Mammary epithelial cell (primary cell): ENCODE measurements at regions of chr4 and their contacts with region 1.

Region 1: GRCh38 chr4:48079972-48080391 is 54.1 kb downstream of the TXK start:
- DNase-seq: no peak
- H3K4me3 ChIP-seq: no peak overlapping the region
- H3K27ac ChIP-seq: no peak overlapping the region
- H3K4me1 ChIP-seq: peaks cover 10% of the 10 kb centered on the region
- H3K27me3 ChIP-seq: no peaks in the 10 kb centered on the region
- CTCF ChIP-seq: no peak

Region 2: DNA sequence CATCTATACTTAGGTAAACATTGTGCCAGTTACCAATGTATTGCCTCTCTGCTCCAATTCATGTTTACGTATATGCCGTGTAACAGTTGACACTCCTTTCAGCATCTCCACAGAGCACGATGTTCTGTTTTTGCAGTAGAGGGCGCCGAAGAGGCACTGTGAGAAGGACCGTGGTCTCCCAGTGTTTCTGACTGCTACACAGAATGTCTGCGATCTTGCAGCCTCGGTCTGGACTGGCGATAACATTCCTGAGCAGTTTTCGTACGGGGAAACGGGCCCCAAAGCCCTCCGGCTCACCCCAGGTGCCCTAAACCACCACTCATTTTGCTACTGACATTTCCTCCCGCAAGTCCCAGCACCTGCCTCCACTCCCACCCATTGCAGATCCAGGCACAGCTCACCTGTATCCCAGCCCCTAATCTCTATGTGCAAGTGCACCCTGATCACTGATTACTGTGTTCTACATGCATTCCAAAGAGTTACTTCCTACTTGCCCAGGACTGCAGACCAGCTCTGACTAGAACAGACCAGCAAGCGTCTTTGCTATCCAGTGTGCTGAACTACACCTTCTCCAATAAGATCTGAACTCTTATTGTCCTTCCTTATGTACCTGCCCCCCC is 153.2 kb before region 1 on chr4:
- CTCF ChIA-PET with region 1: no interaction called
- dilution Hi-C with region 1: no loop called
- in situ Hi-C with region 1: loop called in 1 of 2 experiments (anchors 10 kb)
- intact Hi-C with region 1: loop called (anchors 5 kb)
- DNase-seq: peak; percentile 43
- H3K4me3 ChIP-seq: peak overlapping the region in 1 of 3 experiments; percentile 29
- H3K27ac ChIP-seq: no peak overlapping the region
- H3K4me1 ChIP-seq: peaks cover 8% of the 10 kb centered on the region
- H3K27me3 ChIP-seq: no peaks in the 10 kb centered on the region
- CTCF ChIP-seq: peak; percentile 74 to 86